Activated B cell treated with CpG ODN at 0.5 μM for 24 hours (primary cell): ENCODE measurements at regions of chr2 and their contacts with region 1.

Region 1: DNA sequence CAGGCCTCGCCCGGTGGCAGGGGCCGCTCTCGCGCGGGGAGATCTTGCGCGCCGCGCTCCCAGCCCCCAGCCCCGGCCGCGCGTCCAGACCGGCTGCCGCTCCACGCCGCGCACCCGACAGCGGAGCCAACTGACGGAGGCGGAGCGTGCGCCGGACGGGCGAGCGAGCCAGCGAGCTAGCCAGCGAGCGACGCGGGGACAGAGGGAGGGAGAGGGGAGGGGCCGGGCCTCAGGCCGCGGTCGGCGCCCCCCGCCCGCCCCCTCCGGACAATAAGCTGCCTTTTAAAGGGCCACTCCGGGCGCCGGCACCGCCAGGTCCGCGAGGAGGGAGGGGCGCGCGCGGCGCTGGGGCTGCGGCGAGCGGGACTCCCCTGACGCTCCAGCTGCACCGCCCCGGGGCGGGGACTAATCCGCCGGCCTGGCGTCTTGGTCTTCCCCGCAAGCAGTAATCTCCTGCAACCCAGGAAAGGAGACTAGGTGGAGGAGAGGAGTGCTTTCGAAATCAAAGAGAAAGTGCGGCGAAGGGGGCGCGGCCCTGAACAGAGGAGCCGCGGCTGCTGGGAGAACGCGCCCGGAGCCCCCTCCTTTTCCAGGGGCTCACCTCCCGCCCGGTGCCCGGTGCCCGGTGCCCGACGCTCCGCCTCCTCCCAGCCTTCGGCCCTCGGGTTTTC is at the start of gene BIN1:
- DNase-seq: peak; percentile 75
- ATAC-seq: peak; percentile 89
- H3K4me3 Mint-ChIP-seq: peak within 1 kb of the TSS; percentile 86
- H3K27ac Mint-ChIP-seq: no peak within 1 kb of the TSS
- H3K4me1 Mint-ChIP-seq: peaks cover 13% of the 10 kb centered on the region
- H3K27me3 Mint-ChIP-seq: peaks cover 8% of the 10 kb centered on the region
- CTCF ChIP-seq: no peak
- total RNA-seq, gene BIN1: 62.5 and 63.5 TPM in 2 replicates

Region 2: DNA sequence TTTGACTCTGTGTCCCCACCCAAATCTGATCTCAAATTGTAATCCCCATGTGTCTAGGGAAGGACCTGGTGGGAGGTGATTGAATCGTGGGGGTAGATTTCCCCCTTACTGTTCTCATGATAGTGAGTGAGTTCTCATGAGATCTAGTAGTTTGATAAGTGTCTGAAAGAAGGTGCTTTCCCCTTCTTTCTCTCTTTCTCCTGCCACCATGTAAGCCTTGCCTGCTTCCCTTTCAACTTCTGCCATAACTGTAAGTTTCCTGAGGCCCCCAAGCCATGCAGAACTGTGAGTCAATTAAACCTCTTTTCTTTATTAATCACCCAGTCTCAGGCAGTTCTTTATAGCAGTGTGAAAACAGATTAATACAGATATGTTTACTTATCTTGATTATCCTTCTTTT is 717.6 kb before region 1 on chr2:
- CTCF ChIA-PET with region 1: no interaction called
- POLR2A ChIA-PET with region 1: no interaction called
- intact Hi-C with region 1: no loop called
- DNase-seq: no peak
- ATAC-seq: no peak
- H3K4me3 Mint-ChIP-seq: no peak overlapping the region
- H3K27ac Mint-ChIP-seq: no peak overlapping the region
- H3K4me1 Mint-ChIP-seq: no peaks in the 10 kb centered on the region
- H3K27me3 Mint-ChIP-seq: no peaks in the 10 kb centered on the region
- CTCF ChIP-seq: no peak

Region 3: DNA sequence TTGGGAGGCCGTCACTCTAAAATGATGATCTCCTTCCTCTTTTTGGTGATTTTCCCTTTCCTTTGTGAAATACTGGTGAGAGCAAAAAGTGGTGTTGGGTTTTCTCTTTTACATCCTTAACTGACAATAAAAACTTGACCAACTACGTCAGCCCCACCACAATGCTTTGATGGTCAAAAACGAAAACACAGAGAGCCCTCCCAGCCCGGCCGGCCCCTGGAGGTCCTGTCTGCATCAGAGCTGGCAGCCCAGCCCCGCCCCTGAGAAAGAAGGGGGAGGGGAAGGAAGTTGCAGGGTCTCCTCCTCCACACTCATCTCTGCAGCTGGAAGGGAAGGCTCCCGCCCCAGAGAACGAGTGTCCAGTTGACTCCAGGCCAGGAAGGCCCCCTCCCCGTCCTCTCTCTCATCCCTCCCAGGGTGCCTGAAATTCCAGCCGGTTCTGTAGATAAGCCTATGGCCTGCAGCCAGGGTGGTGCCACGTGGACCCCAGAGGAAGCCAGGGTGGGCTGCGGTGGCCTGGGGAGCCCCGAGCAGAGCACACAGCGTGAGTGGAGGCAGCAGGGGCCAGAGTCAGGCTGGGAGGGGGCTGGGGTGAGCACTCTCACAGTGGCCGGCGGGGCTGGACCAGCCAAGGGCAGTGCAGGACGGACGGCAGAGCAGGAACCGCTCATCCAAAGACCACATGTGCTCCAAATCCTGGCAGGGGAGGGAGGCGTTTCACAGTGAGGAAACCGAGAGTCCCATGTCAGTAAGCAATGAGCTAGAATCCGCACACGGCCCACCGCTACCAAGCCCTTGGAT is 19.9 kb before region 1 on chr2:
- CTCF ChIA-PET with region 1: interaction called, 3 read pairs
- POLR2A ChIA-PET with region 1: interaction called, 3 read pairs
- intact Hi-C with region 1: loop called (anchors 1 kb)
- DNase-seq: peak; percentile 48
- ATAC-seq: peak; percentile 25
- H3K4me3 Mint-ChIP-seq: peak overlapping the region; percentile 82
- H3K27ac Mint-ChIP-seq: peak overlapping the region; percentile 91
- H3K4me1 Mint-ChIP-seq: peaks cover 67% of the 10 kb centered on the region
- H3K27me3 Mint-ChIP-seq: no peaks in the 10 kb centered on the region
- CTCF ChIP-seq: no peak

Region 4: GRCh38 chr2:127153691-127154158 is 46.6 kb after region 1 on chr2:
- CTCF ChIA-PET with region 1: no interaction called
- POLR2A ChIA-PET with region 1: no interaction called
- intact Hi-C with region 1: loop called (anchors 1 kb)
- DNase-seq: no peak
- ATAC-seq: no peak
- H3K4me3 Mint-ChIP-seq: no peak overlapping the region
- H3K27ac Mint-ChIP-seq: no peak overlapping the region
- H3K4me1 Mint-ChIP-seq: peaks cover 18% of the 10 kb centered on the region
- H3K27me3 Mint-ChIP-seq: no peaks in the 10 kb centered on the region
- CTCF ChIP-seq: no peak

Region 5: DNA sequence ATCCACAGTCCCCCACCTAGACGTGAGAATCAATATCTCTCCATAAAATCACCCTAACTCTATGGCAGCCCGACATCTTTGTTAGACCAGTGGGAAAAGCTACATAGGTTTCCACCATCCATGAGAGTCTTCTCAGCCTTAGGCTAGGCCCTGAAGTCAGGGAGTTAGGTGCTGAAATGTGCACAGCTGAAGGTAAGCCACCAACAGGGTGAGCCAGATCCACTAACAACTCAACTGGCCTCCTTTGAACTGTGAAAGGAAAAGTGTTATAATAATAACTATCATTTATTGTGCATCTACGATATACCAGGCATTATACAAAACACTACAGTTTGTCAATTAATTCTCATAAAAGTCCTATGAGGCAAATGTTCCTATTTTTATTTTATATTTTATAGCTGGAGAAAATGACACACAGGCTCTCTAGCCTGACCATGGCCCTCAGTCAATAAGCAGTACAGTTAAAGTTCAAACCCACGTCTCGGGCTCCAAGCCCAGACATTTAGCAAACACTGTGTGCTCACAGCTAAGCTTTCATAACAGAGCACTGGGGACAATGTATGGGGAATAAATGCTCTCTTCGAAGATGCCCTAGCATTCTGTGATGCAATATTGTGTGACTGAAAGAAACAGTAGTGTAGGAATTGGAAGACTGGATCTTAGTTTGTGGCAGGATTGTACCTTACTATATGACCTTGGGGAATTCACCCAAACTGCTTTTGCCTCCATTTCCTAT is 124.2 kb after region 1 on chr2:
- CTCF ChIA-PET with region 1: no interaction called
- POLR2A ChIA-PET with region 1: no interaction called
- intact Hi-C with region 1: no loop called
- DNase-seq: no peak
- ATAC-seq: no peak
- H3K4me3 Mint-ChIP-seq: no peak overlapping the region
- H3K27ac Mint-ChIP-seq: no peak overlapping the region
- H3K4me1 Mint-ChIP-seq: no peaks in the 10 kb centered on the region
- H3K27me3 Mint-ChIP-seq: peaks cover 17% of the 10 kb centered on the region
- CTCF ChIP-seq: no peak